ENCODE measurements at regions of chr6 and their contacts with region 1.

Region 1: DNA sequence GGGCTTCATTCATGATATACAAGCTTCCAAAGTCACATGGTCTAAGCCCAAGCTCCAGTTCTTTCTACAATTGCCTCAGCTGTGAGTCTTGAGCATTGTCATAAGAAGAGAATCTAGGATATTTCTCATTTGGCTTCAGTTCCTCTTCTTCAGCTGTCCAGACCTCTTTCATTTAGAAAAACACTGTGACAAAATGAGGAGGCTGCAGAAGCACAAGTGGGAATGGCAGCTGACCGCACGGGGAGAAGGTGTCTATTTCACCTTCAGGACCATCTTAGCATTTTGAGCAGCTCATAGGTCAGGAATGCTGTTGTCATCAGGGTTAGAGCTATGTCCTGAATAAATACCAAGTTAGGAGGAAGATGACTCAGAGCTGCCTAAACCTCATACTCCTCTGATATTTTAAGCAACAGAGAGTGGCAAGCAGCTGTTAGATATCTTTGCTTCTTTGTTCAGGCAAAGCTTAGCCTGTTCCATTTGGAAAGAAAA is 390.1 kb upstream of the CITED2 start:
- DNase-seq: peak; percentile 76 to 85
- ATAC-seq: peak; percentile 95 to 98
- H3K4me3 ChIP-seq: no peak overlapping the region
- H3K27ac ChIP-seq: peak overlapping the region; percentile 84 to 93 (median 89)
- H3K4me1 ChIP-seq: peaks cover 50 to 55% of the 10 kb centered on the region in 2 donors
- H3K27me3 ChIP-seq: no peaks in the 10 kb centered on the region
- CTCF ChIP-seq: no peak
- POLR2A ChIP-seq: peak in 1 of 2 donors; percentile 49

Region 2: DNA sequence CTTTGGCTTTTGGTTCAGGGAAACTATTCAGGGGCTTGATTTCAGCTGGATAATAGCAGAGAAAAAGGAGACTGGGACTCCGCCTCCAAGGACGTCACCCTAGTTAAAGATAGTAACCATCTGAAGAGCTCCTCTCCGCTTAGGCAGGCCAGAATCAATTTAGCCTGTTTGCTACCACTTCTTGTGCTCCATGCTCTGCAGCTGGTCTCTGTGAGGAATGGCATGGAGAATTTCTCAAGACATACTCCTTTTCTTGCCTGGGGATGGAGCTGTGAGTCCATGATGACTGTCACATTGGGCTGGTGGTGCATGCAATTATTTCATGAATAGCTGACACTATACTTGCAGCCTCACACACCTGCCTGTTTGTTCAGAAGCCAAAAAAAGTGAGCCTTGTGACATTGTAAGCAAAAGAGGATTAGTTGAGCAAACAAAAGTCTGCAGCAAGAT is 534.1 kb before region 1 on chr6:
- in situ Hi-C with region 1: loop called in 1 of 4 experiments (anchors 25 kb)
- intact Hi-C with region 1: no loop called
- DNase-seq: peak; percentile 38 to 57
- ATAC-seq: peak; percentile 89 to 90
- H3K4me3 ChIP-seq: no peak overlapping the region
- H3K27ac ChIP-seq: peak overlapping the region; percentile 69 to 77 (median 71)
- H3K4me1 ChIP-seq: peaks cover 15 to 19% of the 10 kb centered on the region in 2 donors
- H3K27me3 ChIP-seq: no peaks in the 10 kb centered on the region
- CTCF ChIP-seq: peak in 1 of 5 experiments; percentile 25
- POLR2A ChIP-seq: no peak

Region 3: GRCh38 chr6:139291813-139292619 is 472.5 kb before region 1 on chr6 and contains the start of gene TXLNB:
- in situ Hi-C with region 1: no loop called
- intact Hi-C with region 1: loop called (anchors 10 kb)
- DNase-seq: peak; percentile 94 to 97
- ATAC-seq: peak; percentile 78 to 79
- H3K4me3 ChIP-seq: peak within 1 kb of the TSS; percentile 47 to 57 (median 50)
- H3K27ac ChIP-seq: peak within 1 kb of the TSS; percentile 92 to 96 (median 94)
- H3K4me1 ChIP-seq: peaks cover 32 to 40% of the 10 kb centered on the region in 2 donors
- H3K27me3 ChIP-seq: no peaks in the 10 kb centered on the region
- CTCF ChIP-seq: peak in 3 of 5 experiments; percentile 16 to 34 (median 24)
- POLR2A ChIP-seq: peak; percentile 70 to 83
- total RNA-seq, gene TXLNB: 58.3 to 197 (median 124) TPM

Region 4: GRCh38 chr6:139591075-139591865 is 173.3 kb before region 1 on chr6:
- in situ Hi-C with region 1: no loop called
- intact Hi-C with region 1: loop called (anchors 5 kb)
- DNase-seq: no peak
- ATAC-seq: peak; percentile 59 to 73
- H3K4me3 ChIP-seq: no peak overlapping the region
- H3K27ac ChIP-seq: peak overlapping the region; percentile 61 to 84 (median 79)
- H3K4me1 ChIP-seq: peaks cover 49% of the 10 kb centered on the region in 2 donors
- H3K27me3 ChIP-seq: no peaks in the 10 kb centered on the region
- CTCF ChIP-seq: no peak
- POLR2A ChIP-seq: peak in 1 of 2 donors; percentile 15

Region 5: GRCh38 chr6:139973669-139974344 is 209.3 kb after region 1 on chr6:
- in situ Hi-C with region 1: no loop called
- intact Hi-C with region 1: loop called (anchors 10 kb)
- DNase-seq: no peak
- ATAC-seq: peak in 1 of 2 donors; percentile 84
- H3K4me3 ChIP-seq: no peak overlapping the region
- H3K27ac ChIP-seq: peak overlapping the region in 2 of 4 donors; percentile 4 to 37
- H3K4me1 ChIP-seq: peaks cover 12 to 17% of the 10 kb centered on the region in 2 donors
- H3K27me3 ChIP-seq: no peaks in the 10 kb centered on the region
- CTCF ChIP-seq: no peak
- POLR2A ChIP-seq: no peak

Measured in gastrocnemius medialis (tissue), 4 donors.